CD8-positive, alpha-beta T cell (primary cell): ENCODE measurements at regions of chr20 and their contacts with region 1.

Region 1: GRCh38 chr20:37534401-37535157 is 6.9 kb upstream of the BLCAP start:
- DNase-seq: peak in 6 of 9 experiments; percentile 25 to 83 (median 57)
- ATAC-seq: peak; percentile 96
- H3K4me3 ChIP-seq: no peak overlapping the region
- H3K4me3 Mint-ChIP-seq: no peak overlapping the region
- H3K27ac ChIP-seq: no peak overlapping the region
- H3K27ac Mint-ChIP-seq: no peak overlapping the region
- H3K4me1 ChIP-seq: no peaks in the 10 kb centered on the region
- H3K4me1 Mint-ChIP-seq: no peaks in the 10 kb centered on the region
- H3K27me3 ChIP-seq: no peaks in the 10 kb centered on the region
- H3K27me3 Mint-ChIP-seq: peaks cover 10% of the 10 kb centered on the region
- CTCF ChIP-seq: peak; percentile 95

Region 2: DNA sequence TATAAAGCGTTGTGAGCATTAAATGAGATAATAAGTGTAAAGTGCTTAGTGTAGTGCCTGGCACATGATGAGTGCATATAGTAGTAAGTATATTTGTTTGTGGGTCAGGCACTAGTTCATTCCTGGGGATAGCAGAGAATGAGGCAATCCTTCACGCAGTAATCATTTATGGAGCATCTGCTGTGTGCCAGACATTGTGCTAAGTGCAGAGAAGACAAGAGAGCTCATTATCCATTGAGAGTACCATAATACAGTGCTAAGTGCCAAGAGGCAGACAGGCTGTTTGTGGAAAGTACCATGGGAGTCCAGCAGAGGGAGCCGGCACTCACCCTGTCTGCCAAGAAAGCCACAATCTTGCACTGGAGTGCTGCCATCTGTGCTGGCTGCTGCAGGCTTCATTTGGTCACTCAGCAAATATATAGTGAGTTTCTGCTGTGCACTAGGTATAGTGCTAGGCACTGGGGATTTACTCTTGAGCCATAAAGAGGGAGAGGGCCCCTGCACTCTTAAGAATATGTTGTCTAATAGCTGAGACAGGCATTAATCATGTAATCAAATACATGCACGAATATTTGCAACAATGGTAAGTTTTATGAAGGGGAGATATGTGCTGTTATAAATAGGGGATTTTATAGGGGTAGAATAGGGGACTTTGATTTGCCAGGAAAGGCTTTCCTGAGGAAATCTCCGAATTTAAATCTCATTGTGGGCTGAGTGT is 342.3 kb before region 1 on chr20:
- CTCF ChIA-PET with region 1: interaction called, 77 read pairs
- POLR2A ChIA-PET with region 1: interaction called, 3 read pairs
- intact Hi-C with region 1: loop called (anchors 1 kb)
- DNase-seq: peak; percentile 46 to 80 (median 72)
- ATAC-seq: peak; percentile 80
- H3K4me3 ChIP-seq: no peak overlapping the region
- H3K4me3 Mint-ChIP-seq: no peak overlapping the region
- H3K27ac ChIP-seq: no peak overlapping the region
- H3K27ac Mint-ChIP-seq: no peak overlapping the region
- H3K4me1 ChIP-seq: peaks cover 48% of the 10 kb centered on the region
- H3K4me1 Mint-ChIP-seq: peaks cover 79% of the 10 kb centered on the region
- H3K27me3 ChIP-seq: no peaks in the 10 kb centered on the region
- H3K27me3 Mint-ChIP-seq: no peaks in the 10 kb centered on the region
- CTCF ChIP-seq: peak; percentile 95

Region 3: DNA sequence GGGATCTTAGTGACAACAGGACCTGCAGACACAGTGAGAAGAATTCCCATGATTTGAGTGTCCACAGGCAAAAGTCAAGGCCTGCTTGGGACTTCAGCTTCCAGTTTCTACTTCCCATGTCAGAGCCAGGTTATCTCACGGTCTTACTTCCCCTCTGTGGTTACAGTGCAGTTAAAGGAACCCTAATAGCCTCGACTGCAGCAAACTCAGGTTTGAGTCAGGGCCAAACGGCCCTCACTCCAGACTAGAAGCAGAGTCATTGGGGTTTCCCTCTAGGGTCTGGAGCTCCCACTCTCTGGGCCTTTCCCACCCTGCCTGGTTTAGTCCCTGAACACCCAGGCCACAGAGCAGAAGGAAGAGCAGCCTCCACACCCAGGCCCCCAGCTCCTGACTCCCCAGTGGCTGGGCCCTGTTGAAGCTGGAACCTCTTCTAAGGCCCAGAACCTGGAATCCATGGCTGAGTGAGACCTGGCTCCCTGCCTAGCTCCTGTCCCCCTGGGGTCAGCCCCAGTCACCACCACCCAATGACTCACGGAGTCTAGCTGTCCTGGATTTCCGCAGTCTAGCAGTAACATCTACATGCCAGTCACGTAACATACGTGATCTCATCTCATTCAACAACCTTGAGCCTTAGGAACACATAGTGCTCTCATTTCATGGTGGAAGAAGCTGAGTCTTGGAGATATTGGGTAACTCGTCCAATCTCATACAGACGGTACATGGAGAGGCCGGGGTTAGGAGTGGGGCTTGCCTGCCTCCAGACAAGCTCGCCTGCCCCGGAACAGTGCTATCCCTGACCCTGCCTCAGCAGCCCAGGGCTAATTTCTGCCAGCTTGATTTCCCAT is 263.8 kb before region 1 on chr20:
- CTCF ChIA-PET with region 1: interaction called, 109 read pairs
- POLR2A ChIA-PET with region 1: no interaction called
- intact Hi-C with region 1: loop called in 1 of 2 experiments (anchors 1 kb)
- DNase-seq: peak in 1 of 9 experiments; percentile 40
- ATAC-seq: no peak
- H3K4me3 ChIP-seq: no peak overlapping the region
- H3K4me3 Mint-ChIP-seq: no peak overlapping the region
- H3K27ac ChIP-seq: no peak overlapping the region
- H3K27ac Mint-ChIP-seq: no peak overlapping the region
- H3K4me1 ChIP-seq: no peaks in the 10 kb centered on the region
- H3K4me1 Mint-ChIP-seq: no peaks in the 10 kb centered on the region
- H3K27me3 ChIP-seq: no peaks in the 10 kb centered on the region
- H3K27me3 Mint-ChIP-seq: no peaks in the 10 kb centered on the region
- CTCF ChIP-seq: no peak

Region 4: DNA sequence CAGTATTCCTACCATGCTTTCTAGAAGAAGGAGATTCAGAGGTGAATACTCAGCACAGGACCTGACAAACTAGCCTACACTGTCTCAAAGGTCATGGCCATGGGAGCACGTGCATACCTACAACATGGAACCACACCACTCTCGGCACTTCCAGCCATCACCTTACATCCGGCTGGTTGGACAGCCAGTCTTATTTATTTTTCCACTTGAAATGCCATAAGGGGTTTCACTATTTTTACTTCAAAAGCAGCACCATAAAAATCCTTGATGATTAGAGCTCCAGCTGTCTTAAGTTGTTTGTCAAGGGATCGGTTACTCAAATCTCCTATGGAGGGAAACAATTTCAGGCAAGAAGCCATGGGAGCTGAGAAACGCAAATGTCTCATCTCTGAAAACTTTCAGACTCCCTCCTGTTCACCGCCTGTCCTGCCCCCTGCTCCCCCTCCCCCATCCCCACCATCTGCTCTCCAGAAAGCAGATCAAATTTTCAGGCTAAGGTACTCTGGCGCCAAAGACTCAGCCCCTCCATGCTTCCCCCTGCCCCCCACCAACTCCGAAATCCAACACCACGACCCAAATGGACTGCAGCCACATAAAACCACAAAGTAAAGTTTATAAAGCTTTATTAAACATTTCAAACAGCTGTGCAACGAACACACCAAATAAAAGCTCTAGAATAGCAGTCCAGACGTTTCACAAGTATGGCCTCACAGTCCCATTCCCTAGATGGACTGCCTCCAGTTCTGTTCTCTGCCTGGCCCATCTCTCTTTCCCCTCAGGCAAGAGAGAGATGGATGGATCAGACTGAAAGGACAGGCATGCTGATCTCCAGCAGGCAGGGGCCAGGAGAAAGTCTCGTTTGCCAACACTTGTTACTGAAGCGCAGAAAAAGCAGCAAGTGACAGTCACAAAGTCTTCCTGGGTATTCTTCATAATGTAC is 17.5 kb before region 1 on chr20:
- CTCF ChIA-PET with region 1: interaction called, 19 read pairs
- POLR2A ChIA-PET with region 1: no interaction called
- intact Hi-C with region 1: no loop called
- DNase-seq: no peak
- ATAC-seq: no peak
- H3K4me3 ChIP-seq: no peak overlapping the region
- H3K4me3 Mint-ChIP-seq: no peak overlapping the region
- H3K27ac ChIP-seq: no peak overlapping the region
- H3K27ac Mint-ChIP-seq: no peak overlapping the region
- H3K4me1 ChIP-seq: peaks cover 3% of the 10 kb centered on the region
- H3K4me1 Mint-ChIP-seq: peaks cover 37% of the 10 kb centered on the region
- H3K27me3 ChIP-seq: no peaks in the 10 kb centered on the region
- H3K27me3 Mint-ChIP-seq: no peaks in the 10 kb centered on the region
- CTCF ChIP-seq: no peak